ENCODE measurements at regions of chr6 and their contacts with region 1.

Region 1: GRCh38 chr6:168125351-168125995 is 46.5 kb upstream of the FRMD1 start:
- DNase-seq: no peak
- H3K4me3 ChIP-seq: no peak overlapping the region
- H3K27ac ChIP-seq: no peak overlapping the region
- H3K4me1 ChIP-seq: no peaks in the 10 kb centered on the region
- H3K27me3 ChIP-seq: no peaks in the 10 kb centered on the region
- CTCF ChIP-seq: no peak
- EP300 ChIP-seq: no peak
- POLR2A ChIP-seq: no peak

Region 2: GRCh38 chr6:168138436-168138835 is 13.0 kb after region 1 on chr6:
- in situ Hi-C with region 1: no loop called
- intact Hi-C with region 1: loop called (anchors 1 kb)
- DNase-seq: no peak
- H3K4me3 ChIP-seq: no peak overlapping the region
- H3K27ac ChIP-seq: no peak overlapping the region
- H3K4me1 ChIP-seq: no peaks in the 10 kb centered on the region
- H3K27me3 ChIP-seq: no peaks in the 10 kb centered on the region
- CTCF ChIP-seq: no peak
- EP300 ChIP-seq: no peak
- POLR2A ChIP-seq: no peak

Measured in transverse colon (tissue), 4 donors.